Activated naive CD4-positive, alpha-beta T cell treated with anti-CD3 and anti-CD28 coated beads, Interleukin-2, amount 10 ng/mL, durations not matched to agents 7 days and 5 days (primary cell): ENCODE measurements at regions of chr18 and their contacts with region 1.

Region 1: GRCh38 chr18:11995445-11996189 is 14.3 kb downstream of the IMPA2 start:
- DNase-seq: peak; percentile 74
- H3K4me3 Mint-ChIP-seq: no peak overlapping the region
- H3K27ac Mint-ChIP-seq: peak overlapping the region; percentile 60
- H3K4me1 Mint-ChIP-seq: peaks cover 22% of the 10 kb centered on the region
- H3K27me3 Mint-ChIP-seq: no peaks in the 10 kb centered on the region

Region 2: DNA sequence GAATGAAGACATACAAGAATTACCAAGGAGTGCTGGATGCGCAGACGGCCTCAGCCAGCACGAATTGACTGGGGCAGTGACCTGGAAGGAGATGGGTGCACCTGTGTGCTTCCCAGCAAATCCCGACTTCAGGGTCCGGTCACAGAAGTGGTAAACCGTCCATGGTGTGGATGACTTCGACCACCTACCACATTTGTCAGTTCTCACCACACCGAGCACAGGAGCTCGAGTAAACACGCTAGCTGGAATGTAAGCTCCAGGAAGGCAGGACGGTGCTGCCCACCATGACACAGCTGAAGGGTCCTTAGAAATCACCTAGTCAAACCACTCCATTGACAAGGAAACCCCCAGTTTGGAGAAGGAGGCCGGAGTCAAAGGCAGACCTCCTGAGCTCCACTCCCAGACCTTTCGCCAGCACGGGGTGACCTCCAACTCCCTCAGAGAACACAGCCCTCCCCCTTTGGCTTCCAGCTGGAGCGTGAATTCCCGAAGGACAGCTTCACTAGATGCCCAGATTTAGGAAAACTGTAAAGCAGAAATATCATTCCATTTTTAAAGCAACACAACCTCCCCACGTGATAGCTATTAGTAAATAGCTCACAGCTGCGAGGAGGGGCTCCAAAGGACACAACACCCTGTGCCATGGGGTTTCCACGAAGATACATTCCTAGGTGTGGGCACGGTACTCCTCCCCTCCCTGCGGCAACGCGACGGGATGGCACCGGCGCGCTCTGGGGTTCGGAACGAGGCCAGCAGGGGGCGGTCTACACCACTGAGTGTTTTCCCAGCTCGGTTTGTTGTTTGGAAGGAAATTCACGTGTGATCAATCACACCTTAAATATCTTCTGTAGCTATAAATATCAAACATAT is 340.6 kb before region 1 on chr18:
- CTCF ChIA-PET with region 1: interaction called, 14 read pairs
- DNase-seq: peak; percentile 66
- H3K4me3 Mint-ChIP-seq: no peak overlapping the region
- H3K27ac Mint-ChIP-seq: no peak overlapping the region
- H3K4me1 Mint-ChIP-seq: peaks cover 3% of the 10 kb centered on the region
- H3K27me3 Mint-ChIP-seq: peaks cover 43% of the 10 kb centered on the region

Region 3: DNA sequence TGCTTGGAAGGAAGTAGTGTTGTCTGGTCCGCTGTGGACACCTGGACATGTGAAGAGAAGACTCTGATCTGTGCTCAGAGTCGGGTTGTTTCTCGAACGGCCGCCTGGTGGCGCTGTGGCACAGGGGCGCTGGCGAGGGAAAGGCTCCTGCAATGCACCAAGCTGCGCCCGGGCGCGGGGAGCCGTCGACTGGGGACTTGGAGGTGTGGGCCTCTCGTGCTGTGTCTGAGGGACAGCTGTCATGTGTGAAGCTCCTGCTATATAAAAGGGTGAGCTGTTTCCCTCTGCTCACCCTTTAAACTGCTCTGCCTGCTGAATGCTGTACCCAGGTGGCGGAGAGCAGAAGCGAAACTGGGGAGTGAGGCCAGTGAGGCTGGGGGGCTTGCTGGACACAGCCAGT is 262.6 kb before region 1 on chr18:
- CTCF ChIA-PET with region 1: interaction called, 42 read pairs
- DNase-seq: peak; percentile 77
- H3K4me3 Mint-ChIP-seq: no peak overlapping the region
- H3K27ac Mint-ChIP-seq: no peak overlapping the region
- H3K4me1 Mint-ChIP-seq: peaks cover 3% of the 10 kb centered on the region
- H3K27me3 Mint-ChIP-seq: peaks cover 26% of the 10 kb centered on the region

Region 4: GRCh38 chr18:11937874-11938478 is 57.6 kb before region 1 on chr18:
- CTCF ChIA-PET with region 1: interaction called, 272 read pairs
- DNase-seq: peak; percentile 85
- H3K4me3 Mint-ChIP-seq: no peak overlapping the region
- H3K27ac Mint-ChIP-seq: no peak overlapping the region
- H3K4me1 Mint-ChIP-seq: no peaks in the 10 kb centered on the region
- H3K27me3 Mint-ChIP-seq: peaks cover 11% of the 10 kb centered on the region

Region 5: DNA sequence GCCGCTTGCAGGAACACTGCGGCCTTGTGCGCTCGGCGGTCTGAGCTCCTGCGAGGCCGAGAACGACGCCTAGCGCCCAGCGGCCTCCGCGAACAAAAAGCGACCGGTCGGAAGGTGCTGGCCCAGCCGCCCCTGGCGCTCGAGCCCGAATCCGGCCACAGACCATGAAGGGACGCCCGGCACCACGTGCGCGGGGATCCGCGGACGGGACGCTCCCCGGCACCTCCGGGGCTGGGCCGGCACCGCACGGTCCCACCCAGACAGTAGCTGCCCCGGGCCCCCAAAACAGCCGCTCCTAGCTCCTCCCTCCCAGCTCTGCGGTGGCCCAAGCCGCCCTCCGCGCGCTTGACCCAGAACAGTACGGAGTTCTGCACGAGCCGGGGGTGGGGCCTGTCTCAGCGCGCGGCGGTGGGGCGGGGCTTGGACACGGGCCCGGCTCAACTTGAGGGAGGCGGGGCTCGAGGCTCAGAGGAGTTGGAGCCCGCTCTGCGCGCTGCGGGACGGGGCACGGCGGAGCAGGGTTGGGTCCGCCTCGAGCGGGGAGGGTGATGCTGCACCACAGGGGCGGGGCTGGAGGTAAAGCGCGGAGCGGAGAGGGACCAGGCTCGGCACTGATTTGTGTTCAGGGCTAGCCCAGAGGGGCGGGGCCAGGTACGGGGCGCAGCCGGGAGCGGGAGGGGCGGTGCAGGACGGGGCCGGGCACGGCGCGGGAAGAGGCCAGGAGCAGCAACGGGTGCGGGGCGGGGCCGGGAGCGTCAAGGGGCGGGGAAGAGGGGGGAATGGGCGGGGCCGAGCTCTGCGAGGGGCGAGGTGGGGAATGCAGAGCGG is 14.8 kb before region 1 on chr18:
- CTCF ChIA-PET with region 1: interaction called, 14 read pairs
- DNase-seq: peak; percentile 99
- H3K4me3 Mint-ChIP-seq: peak overlapping the region; percentile 87
- H3K27ac Mint-ChIP-seq: peak overlapping the region; percentile 77
- H3K4me1 Mint-ChIP-seq: peaks cover 25% of the 10 kb centered on the region
- H3K27me3 Mint-ChIP-seq: peaks cover 22% of the 10 kb centered on the region

Region 6: DNA sequence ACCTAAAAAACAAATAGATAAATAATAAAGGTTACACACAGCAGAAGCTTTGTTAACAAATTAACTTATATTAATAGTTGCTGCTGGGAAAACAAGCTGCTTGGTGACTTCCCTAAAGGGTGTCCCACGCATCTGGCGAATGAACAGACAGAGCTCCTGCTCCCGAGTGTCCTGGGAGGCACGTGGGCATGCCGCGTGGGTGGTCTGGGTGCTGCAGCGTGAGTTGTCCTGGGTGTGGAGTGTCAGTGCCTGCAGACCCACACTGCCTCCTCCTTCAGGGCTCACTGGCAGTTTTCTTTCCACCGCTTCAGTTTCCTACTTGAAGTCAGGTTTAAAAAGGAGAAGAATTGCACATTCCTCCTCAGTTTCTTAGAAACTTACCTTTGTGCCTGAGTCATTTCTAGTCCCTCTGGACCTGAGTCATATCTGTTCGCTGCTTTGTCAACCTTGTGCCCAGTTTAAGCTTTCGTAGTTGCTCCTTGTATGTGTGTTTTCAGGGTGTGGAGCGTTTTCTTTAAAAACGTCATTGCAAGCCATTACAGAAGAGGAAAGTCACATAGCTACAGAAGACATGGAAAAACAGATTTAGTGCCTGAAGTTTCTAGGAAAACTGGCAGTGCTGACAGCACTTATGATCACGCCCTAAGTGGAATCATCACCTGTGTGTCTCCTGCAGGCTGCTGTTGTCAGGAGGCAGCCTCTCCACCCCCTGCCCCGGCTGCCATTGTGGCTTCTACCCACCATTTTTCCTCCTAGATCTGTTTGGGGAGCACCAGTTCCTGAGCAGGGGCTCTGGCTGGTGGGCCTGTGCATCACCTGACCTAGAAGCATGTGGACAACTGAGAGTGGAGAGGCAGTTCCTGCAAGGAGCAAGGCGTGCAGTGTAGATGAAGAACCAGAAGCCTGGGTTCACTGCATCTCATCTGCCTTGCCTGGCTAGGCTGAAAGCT is 10.2 kb after region 1 on chr18:
- CTCF ChIA-PET with region 1: interaction called, 16 read pairs
- DNase-seq: no peak
- H3K4me3 Mint-ChIP-seq: no peak overlapping the region
- H3K27ac Mint-ChIP-seq: no peak overlapping the region
- H3K4me1 Mint-ChIP-seq: no peaks in the 10 kb centered on the region
- H3K27me3 Mint-ChIP-seq: no peaks in the 10 kb centered on the region